PC-3 (cell line): ENCODE measurements at regions of chr11 and their contacts with region 1.

Region 1: GRCh38 chr11:8527939-8528338 is 66.1 kb downstream of the STK33 start:
- DNase-seq: no peak
- ATAC-seq: no peak
- H3K4me3 ChIP-seq: no peak overlapping the region
- H3K27ac ChIP-seq: no peak overlapping the region
- H3K4me1 ChIP-seq: no peaks in the 10 kb centered on the region
- H3K27me3 ChIP-seq: peaks cover 52% of the 10 kb centered on the region
- CTCF ChIP-seq: no peak

Region 2: GRCh38 chr11:8477680-8478079 is 50.3 kb before region 1 on chr11:
- CTCF ChIA-PET with region 1: no interaction called
- POLR2A ChIA-PET with region 1: no interaction called
- intact Hi-C with region 1: loop called (anchors 5 kb)
- DNase-seq: no peak
- ATAC-seq: no peak
- H3K4me3 ChIP-seq: no peak overlapping the region
- H3K27ac ChIP-seq: no peak overlapping the region
- H3K4me1 ChIP-seq: no peaks in the 10 kb centered on the region
- H3K27me3 ChIP-seq: peaks cover 50% of the 10 kb centered on the region
- CTCF ChIP-seq: no peak